ENCODE measurements at regions of chr11 and their contacts with region 1.

Region 1: GRCh38 chr11:130861902-130862860 is 54.1 kb downstream of the SNX19 start:
- DNase-seq: peak; percentile 95 to 97
- H3K4me3 ChIP-seq: no peak overlapping the region
- H3K27ac ChIP-seq: peak overlapping the region in 2 of 5 donors; percentile 26 to 36
- H3K4me1 ChIP-seq: peaks cover 0 to 23% (median 10%) of the 10 kb centered on the region in 4 donors
- H3K27me3 ChIP-seq: no peaks in the 10 kb centered on the region
- CTCF ChIP-seq: peak in 6 of 7 experiments; percentile 94 to 100 (median 99)
- EP300 ChIP-seq: no peak
- POLR2A ChIP-seq: no peak

Region 2: DNA sequence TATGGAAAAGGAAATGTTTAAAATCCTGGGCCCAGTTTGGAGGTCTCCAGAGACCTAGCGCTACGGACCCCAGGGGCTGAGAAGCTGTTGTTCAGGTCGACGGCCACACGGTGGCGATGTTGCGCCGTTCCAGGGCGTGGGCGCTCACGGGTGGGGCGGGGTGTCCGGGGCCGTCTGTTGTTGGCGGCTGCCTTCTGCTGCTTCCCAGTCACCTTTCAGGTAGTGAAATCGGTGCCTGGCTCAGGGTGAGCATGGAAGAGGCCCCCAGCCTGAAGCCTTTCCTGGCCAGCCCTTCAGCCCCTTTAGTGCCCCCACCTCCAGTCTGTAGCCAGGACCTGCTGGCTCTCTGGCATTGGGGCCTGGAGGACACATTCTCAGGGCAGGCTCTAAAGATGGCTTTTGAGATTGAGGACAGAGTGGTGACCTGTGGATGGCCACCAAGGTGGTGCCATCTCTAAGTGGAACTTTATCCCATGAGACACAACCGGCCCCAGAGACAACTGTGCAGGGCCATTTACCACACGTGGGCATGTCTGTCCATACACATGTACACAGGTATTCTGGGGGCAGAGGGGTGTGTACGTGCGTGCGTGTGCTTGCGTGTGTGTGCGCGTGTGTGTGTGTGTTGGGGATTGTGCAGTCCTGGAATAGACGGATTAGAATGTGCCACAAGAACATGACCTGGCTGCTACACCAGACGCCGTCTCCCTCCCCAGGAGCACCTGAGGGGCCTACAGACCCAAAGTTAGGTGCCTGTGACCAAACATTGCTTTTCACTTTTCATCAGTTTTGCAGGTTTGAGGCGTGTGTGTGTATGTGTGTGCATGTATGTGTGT is 648.8 kb before region 1 on chr11:
- intact Hi-C with region 1: loop called (anchors 10 kb)
- DNase-seq: peak; percentile 74 to 85
- H3K4me3 ChIP-seq: no peak overlapping the region
- H3K27ac ChIP-seq: no peak overlapping the region
- H3K4me1 ChIP-seq: peaks cover 8 to 13% (median 9%) of the 10 kb centered on the region in 4 donors
- H3K27me3 ChIP-seq: peaks cover 0 to 4% (median 0%) of the 10 kb centered on the region in 3 donors
- CTCF ChIP-seq: peak in 5 of 7 experiments; percentile 85 to 97 (median 93)
- EP300 ChIP-seq: no peak
- POLR2A ChIP-seq: no peak

Region 3: DNA sequence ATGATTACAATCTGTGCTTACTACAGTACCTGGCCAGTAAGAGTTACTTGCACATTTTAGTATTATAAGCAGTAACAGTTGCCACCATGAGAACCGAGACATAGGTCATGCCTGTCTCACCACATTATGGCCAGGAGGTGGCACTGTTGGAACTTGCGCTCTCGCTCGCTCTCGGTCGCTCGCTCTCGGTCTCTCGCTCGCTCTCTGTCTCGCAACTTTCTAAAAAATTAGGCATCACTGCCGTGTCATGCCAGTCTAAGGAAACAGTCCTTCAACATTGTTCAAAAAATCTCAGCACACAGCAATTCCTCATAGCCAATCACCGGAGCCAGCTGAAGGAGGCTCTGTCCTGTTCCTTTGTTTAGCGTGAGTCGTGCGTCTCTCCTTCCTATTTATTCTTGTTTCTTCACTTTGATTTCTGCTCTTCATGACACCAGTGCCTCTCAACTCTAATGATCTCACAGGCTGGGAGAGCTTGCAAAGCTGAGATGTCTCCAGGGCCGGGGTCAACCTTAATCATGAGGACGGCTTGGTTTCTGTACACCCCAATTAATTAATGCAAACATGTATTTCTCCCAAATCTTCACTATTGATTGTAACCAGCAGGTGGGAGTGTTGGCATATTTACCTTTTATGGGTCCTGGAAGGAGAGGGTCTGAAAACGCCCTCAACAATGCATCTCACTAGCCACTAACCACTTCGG is 427.5 kb before region 1 on chr11:
- intact Hi-C with region 1: loop called (anchors 5 kb)
- DNase-seq: peak; percentile 81 to 94
- H3K4me3 ChIP-seq: peak overlapping the region; percentile 51 to 60 (median 54)
- H3K27ac ChIP-seq: peak overlapping the region; percentile 57 to 87 (median 66)
- H3K4me1 ChIP-seq: peaks cover 0 to 19% (median 9%) of the 10 kb centered on the region in 4 donors
- H3K27me3 ChIP-seq: peaks cover 0 to 16% (median 14%) of the 10 kb centered on the region in 3 donors
- CTCF ChIP-seq: peak in 5 of 7 experiments; percentile 78 to 90 (median 83)
- EP300 ChIP-seq: no peak
- POLR2A ChIP-seq: no peak

Measured in stomach (tissue), 19 donors.